Naive thymus-derived CD4-positive, alpha-beta T cell (primary cell): ENCODE measurements at regions of chr20 and their contacts with region 1.

Region 1: GRCh38 chr20:1503564-1504227 is 12.5 kb upstream of the SIRPB2 start:
- DNase-seq: peak; percentile 31 to 81 (median 78)
- ATAC-seq: peak; percentile 100
- H3K4me3 ChIP-seq: no peak overlapping the region
- H3K4me3 Mint-ChIP-seq: peak overlapping the region in 1 of 10 donors; percentile 51
- H3K27ac ChIP-seq: no peak overlapping the region
- H3K27ac Mint-ChIP-seq: peak overlapping the region in 4 of 9 donors; percentile 3 to 75 (median 20)
- H3K4me1 ChIP-seq: no peaks in the 10 kb centered on the region
- H3K4me1 Mint-ChIP-seq: peaks cover 3 to 8% (median 4%) of the 10 kb centered on the region in 7 donors
- H3K27me3 ChIP-seq: peaks cover 0 to 6% of the 10 kb centered on the region in 2 donors
- H3K27me3 Mint-ChIP-seq: peaks cover 9 to 61% (median 31%) of the 10 kb centered on the region in 5 donors

Region 2: GRCh38 chr20:1313236-1313964 is 190.3 kb before region 1 on chr20:
- CTCF ChIA-PET with region 1: no interaction called
- POLR2A ChIA-PET with region 1: no interaction called
- intact Hi-C with region 1: loop called (anchors 1 kb)
- DNase-seq: peak; percentile 41 to 69 (median 57)
- ATAC-seq: peak; percentile 85
- H3K4me3 ChIP-seq: no peak overlapping the region
- H3K4me3 Mint-ChIP-seq: peak overlapping the region in 2 of 10 donors; percentile 28 to 34
- H3K27ac ChIP-seq: no peak overlapping the region
- H3K27ac Mint-ChIP-seq: peak overlapping the region in 1 of 9 donors; percentile 48
- H3K4me1 ChIP-seq: peaks cover 5 to 7% of the 10 kb centered on the region in 2 donors
- H3K4me1 Mint-ChIP-seq: peaks cover 0 to 16% (median 4%) of the 10 kb centered on the region in 7 donors
- H3K27me3 ChIP-seq: no peaks in the 10 kb centered on the region
- H3K27me3 Mint-ChIP-seq: no peaks in the 10 kb centered on the region